Adrenal gland (tissue), 19 donors: ENCODE measurements at regions of chr9 and their contacts with region 1.

Region 1: GRCh38 chr9:100028201-100028784 is 70.5 kb downstream of the ERP44 start:
- DNase-seq: peak; percentile 70 to 92 (median 80)
- H3K4me3 ChIP-seq: no peak overlapping the region
- H3K27ac ChIP-seq: no peak overlapping the region
- H3K4me1 ChIP-seq: no peaks in the 10 kb centered on the region
- H3K27me3 ChIP-seq: no peaks in the 10 kb centered on the region
- CTCF ChIP-seq: peak; percentile 86 to 95 (median 90)
- POLR2A ChIP-seq: no peak

Region 2: DNA sequence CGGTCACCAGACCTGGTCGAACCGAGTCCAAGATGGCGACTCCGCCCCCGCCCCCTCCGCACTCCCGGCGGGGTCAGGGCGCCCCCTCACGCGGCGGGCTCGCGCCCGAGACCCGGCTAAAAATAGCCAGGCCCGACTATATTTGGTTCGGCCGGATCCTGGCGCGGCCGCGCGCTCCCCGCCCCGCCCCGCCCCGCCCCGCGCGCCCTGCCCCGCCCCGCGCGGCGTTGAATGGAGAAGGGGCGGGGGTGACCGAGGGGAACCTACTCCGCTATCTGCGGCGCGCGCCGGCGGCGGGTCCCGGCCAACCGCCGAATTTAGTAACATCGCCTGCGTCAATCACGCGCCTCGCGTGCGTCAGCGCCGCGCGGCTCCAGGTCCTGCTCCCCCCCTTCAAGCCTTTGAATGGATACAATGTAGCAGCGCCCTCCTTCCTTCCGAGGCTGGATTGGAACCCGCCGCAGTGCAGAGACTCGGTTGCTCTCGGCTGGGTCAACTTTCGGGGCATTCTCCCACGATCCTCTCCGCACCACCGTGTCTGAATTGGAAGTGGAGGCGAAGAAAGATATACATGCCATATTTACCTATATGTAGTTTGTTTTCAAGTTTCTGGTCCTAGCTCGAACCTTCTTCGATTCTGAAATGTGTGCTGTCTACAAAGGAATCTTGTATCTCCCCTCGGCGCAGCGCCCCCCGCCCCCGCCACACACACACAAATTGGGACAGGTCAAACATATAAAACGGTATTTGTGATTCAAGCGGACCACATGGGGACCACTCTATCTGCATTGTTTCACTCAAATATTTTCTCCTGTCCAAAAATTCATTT is 208.2 kb before region 1 on chr9:
- intact Hi-C with region 1: no loop called
- DNase-seq: peak; percentile 94 to 97 (median 96)
- H3K4me3 ChIP-seq: peak overlapping the region; percentile 13 to 85 (median 48)
- H3K27ac ChIP-seq: peak overlapping the region; percentile 97 to 100 (median 98)
- H3K4me1 ChIP-seq: peaks cover 10 to 21% of the 10 kb centered on the region in 2 donors
- H3K27me3 ChIP-seq: no peaks in the 10 kb centered on the region
- CTCF ChIP-seq: peak in 1 of 6 experiments; percentile 6
- POLR2A ChIP-seq: peak; percentile 77 to 80

Region 3: DNA sequence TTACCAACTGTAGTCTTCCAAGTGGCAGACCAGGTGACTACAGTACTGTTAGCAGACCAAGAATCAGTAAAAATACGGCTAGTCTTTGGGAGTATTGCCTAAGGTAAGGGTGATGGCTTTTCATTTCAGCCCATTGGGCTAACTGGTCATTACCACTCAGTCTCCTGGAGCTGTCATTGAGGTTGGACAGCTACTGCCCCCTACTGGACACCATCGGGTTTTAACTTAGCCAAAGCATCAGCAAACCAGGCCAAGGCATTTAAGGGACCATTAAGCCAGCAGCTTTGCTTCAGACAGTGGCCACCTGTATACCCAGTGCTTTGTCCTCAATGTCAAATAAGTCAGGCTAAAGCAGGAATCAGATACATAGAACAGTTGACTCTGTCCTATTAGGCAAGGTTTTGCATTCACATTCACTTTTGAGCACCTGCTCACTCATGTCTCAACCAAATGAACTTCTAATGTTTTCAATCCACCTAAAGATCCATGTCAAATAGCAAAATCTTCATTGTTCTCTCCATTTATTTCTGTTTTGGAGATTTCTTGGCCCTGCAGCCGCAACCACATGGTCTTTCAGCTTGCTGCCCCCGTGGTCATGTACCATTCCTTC is 188.0 kb after region 1 on chr9:
- intact Hi-C with region 1: loop called (anchors 5 to 10 kb)
- DNase-seq: peak; percentile 50 to 83 (median 58)
- H3K4me3 ChIP-seq: no peak overlapping the region
- H3K27ac ChIP-seq: no peak overlapping the region
- H3K4me1 ChIP-seq: no peaks in the 10 kb centered on the region
- H3K27me3 ChIP-seq: no peaks in the 10 kb centered on the region
- CTCF ChIP-seq: peak; percentile 52 to 69 (median 60)
- POLR2A ChIP-seq: no peak

Region 4: GRCh38 chr9:100222674-100223073 is 194.4 kb after region 1 on chr9:
- intact Hi-C with region 1: loop called (anchors 5 to 10 kb)
- DNase-seq: no peak
- H3K4me3 ChIP-seq: no peak overlapping the region
- H3K27ac ChIP-seq: no peak overlapping the region
- H3K4me1 ChIP-seq: peaks cover 0 to 10% of the 10 kb centered on the region in 2 donors
- H3K27me3 ChIP-seq: no peaks in the 10 kb centered on the region
- CTCF ChIP-seq: peak; percentile 6 to 43 (median 32)
- POLR2A ChIP-seq: no peak

Region 5: GRCh38 chr9:100322954-100323536 is 294.8 kb after region 1 on chr9:
- intact Hi-C with region 1: loop called in 1 of 2 experiments (anchors 10 kb)
- DNase-seq: peak; percentile 34 to 83 (median 54)
- H3K4me3 ChIP-seq: no peak overlapping the region
- H3K27ac ChIP-seq: no peak overlapping the region
- H3K4me1 ChIP-seq: no peaks in the 10 kb centered on the region
- H3K27me3 ChIP-seq: no peaks in the 10 kb centered on the region
- CTCF ChIP-seq: peak; percentile 58 to 76 (median 72)
- POLR2A ChIP-seq: no peak